ENCODE measurements at regions of chr3 and their contacts with region 1.

Region 1: GRCh38 chr3:170117134-170117533 is 64.4 kb downstream of the PHC3 start:
- DNase-seq: no peak
- H3K4me3 ChIP-seq: no peak overlapping the region
- H3K27ac ChIP-seq: no peak overlapping the region
- H3K4me1 ChIP-seq: no peaks in the 10 kb centered on the region
- H3K27me3 ChIP-seq: no peaks in the 10 kb centered on the region
- CTCF ChIP-seq: peak in 2 of 3 experiments; percentile 10 to 43; a peak in 1 of 4 replicates
- EP300 ChIP-seq: no peak
- POLR2A ChIP-seq: no peak
- RAD21 ChIP-seq: peak in 1 of 2 experiments; percentile 25; a peak in 1 of 4 replicates

Region 2: DNA sequence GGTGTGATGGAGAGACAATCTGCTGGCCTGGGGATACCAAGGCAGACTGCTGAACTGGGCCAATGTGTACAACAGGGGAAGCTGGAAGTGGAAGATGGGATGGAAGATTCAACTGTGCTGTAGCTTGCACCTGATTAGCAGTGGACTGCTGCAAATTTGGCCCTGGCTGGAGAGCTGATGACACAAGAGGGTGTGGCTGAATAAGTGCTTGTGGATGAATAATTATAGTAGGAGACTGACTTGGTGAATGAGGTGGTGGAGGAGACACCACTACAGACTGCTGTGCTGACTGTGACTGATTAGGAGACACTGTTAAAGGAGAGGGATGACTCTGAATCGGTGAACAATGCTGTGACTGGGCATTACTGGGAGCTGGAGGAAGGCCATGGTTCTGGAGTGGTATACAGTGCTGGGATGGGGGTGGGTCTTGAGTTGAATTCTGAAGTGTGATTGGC is 11.9 kb after region 1 on chr3:
- CTCF ChIA-PET with region 1: interaction called, 17 read pairs
- POLR2A ChIA-PET with region 1: interaction called, 4 read pairs
- DNase-seq: no peak
- H3K4me3 ChIP-seq: no peak overlapping the region
- H3K27ac ChIP-seq: no peak overlapping the region
- H3K4me1 ChIP-seq: no peaks in the 10 kb centered on the region
- H3K27me3 ChIP-seq: no peaks in the 10 kb centered on the region
- CTCF ChIP-seq: no peak
- EP300 ChIP-seq: no peak
- POLR2A ChIP-seq: no peak
- RAD21 ChIP-seq: no peak

Measured in H1 (cell line).